Activated naive CD4-positive, alpha-beta T cell treated with anti-CD3 and anti-CD28 coated beads for 36 hours (primary cell): ENCODE measurements at regions of chr11 and their contacts with region 1.

Region 1: DNA sequence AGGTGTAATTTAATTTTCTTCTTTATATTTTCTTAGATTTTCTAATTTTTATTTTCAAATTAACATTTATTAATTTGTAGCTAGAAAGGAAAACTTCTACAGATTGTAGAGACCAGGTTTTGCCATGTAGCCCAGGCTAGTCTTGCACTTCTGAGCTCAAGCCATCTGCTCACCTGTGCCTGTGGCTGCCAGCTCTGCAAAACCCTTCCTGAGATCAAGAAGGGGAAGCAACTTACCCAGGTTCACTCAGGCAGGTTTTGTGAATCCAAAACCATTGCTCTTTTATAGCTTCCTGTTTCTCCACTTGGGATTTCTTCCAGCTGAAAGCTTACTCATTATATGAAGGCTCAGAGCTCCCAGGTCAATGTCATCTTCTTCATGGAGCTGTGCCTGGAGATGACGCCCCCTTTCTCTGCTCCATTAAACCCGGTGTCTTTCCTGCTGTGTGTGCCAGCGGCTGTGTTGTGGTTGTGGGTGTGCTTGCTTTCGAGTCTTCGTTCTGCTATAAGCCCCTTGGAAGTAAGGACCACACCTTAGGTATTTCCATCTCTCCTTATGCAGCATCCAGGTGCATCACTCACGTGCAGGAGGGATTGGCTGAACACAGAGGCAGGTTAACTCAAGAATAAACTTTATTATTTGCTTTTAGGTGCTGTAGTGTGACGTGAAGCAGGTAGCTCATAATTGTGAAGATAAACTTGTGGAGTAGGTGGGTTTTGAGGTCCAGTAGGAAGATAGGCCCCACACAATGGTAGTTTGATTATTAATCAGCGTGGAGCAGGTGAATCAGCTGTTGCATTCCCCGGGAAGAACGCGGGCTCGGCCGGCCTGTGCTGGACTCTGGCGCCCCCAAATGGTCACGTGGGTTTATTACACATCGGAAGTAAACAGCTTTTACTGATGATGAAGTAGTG is 42.2 kb upstream of the INCENP start:
- DNase-seq: peak; percentile 91
- H3K4me3 Mint-ChIP-seq: no peak overlapping the region
- H3K27ac Mint-ChIP-seq: no peak overlapping the region
- H3K4me1 Mint-ChIP-seq: peaks cover 8% of the 10 kb centered on the region
- H3K27me3 Mint-ChIP-seq: no peaks in the 10 kb centered on the region

Region 2: DNA sequence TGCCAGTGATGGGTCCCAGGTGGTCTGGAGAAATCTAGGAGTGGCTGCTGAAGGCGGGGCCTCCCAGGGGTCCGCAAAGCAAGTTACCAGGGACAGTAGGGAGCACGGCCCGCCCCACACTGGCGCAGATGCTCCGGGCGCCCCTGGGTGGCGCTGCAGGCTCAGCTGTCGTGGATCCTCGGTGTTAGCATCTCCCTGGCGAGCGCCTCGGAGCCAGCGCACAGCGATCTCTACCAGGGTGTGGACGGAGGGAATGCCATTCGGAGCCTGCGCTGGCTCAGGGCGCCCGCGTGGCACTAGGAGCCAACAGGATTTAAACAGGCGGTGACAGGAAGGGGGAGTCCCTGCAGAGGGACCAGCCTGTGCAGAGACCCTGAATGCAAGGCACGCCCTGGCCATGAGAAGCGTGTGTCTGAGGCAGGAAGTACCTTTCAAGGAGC is 210.5 kb before region 1 on chr11:
- CTCF ChIA-PET with region 1: interaction called, 32 read pairs
- intact Hi-C with region 1: loop called (anchors 1 kb)
- DNase-seq: peak; percentile 75
- H3K4me3 Mint-ChIP-seq: no peak overlapping the region
- H3K27ac Mint-ChIP-seq: no peak overlapping the region
- H3K4me1 Mint-ChIP-seq: peaks cover 2% of the 10 kb centered on the region
- H3K27me3 Mint-ChIP-seq: no peaks in the 10 kb centered on the region

Region 3: DNA sequence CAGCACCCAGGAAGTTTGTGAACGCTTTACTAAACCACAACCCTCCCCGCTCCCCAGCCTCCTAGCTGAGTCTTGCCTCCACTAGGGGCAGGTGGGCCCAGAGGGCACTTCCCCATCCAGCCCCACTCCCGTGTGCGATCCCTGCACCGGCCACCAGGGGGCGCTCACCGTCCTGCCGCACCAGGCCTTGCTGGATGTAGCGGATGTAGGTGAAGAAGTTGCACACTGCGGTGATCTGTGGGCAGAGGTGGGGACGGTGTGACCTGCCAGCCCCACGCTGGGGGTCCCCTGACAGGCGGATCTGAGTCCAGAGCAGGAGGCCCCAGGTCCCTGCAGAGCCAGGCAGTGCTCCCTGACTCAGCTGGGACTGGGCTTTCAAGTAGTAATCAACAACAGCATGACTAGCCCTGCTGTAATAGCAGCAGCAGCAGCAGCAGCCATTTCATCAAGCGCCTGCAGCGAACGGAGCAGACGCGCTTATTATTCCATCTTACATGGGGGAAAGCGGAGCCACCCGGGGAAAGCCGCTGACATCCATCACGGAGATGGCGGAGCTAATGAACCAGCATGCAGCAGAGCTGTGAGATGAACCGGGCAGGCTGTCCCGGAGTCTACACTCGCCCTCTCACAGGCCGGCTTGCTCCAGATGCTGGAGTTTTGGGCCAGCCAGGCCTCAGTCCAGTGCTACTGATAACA is 182.3 kb before region 1 on chr11:
- CTCF ChIA-PET with region 1: interaction called, 270 read pairs
- intact Hi-C with region 1: loop called (anchors 1 kb)
- DNase-seq: peak; percentile 93
- H3K4me3 Mint-ChIP-seq: no peak overlapping the region
- H3K27ac Mint-ChIP-seq: no peak overlapping the region
- H3K4me1 Mint-ChIP-seq: peaks cover 4% of the 10 kb centered on the region
- H3K27me3 Mint-ChIP-seq: no peaks in the 10 kb centered on the region

Region 4: GRCh38 chr11:61947486-61948210 is 134.0 kb before region 1 on chr11:
- CTCF ChIA-PET with region 1: interaction called, 105 read pairs
- intact Hi-C with region 1: loop called (anchors 1 kb)
- DNase-seq: peak; percentile 86
- H3K4me3 Mint-ChIP-seq: no peak overlapping the region
- H3K27ac Mint-ChIP-seq: no peak overlapping the region
- H3K4me1 Mint-ChIP-seq: peaks cover 7% of the 10 kb centered on the region
- H3K27me3 Mint-ChIP-seq: no peaks in the 10 kb centered on the region

Region 5: GRCh38 chr11:61967116-61967923 is 114.3 kb before region 1 on chr11 and contains the start of gene FTH1:
- CTCF ChIA-PET with region 1: interaction called, 32 read pairs
- intact Hi-C with region 1: no loop called
- DNase-seq: peak; percentile 85
- H3K4me3 Mint-ChIP-seq: peak within 1 kb of the TSS; percentile 93
- H3K27ac Mint-ChIP-seq: peak within 1 kb of the TSS; percentile 94
- H3K4me1 Mint-ChIP-seq: peaks cover 67% of the 10 kb centered on the region
- H3K27me3 Mint-ChIP-seq: no peaks in the 10 kb centered on the region
- total RNA-seq, gene FTH1: 1,302 to 1,352 TPM

Region 6: GRCh38 chr11:62069986-62070919 is 11.4 kb before region 1 on chr11:
- CTCF ChIA-PET with region 1: interaction called, 10 read pairs
- intact Hi-C with region 1: no loop called
- DNase-seq: no peak
- H3K4me3 Mint-ChIP-seq: no peak overlapping the region
- H3K27ac Mint-ChIP-seq: no peak overlapping the region
- H3K4me1 Mint-ChIP-seq: peaks cover 5% of the 10 kb centered on the region
- H3K27me3 Mint-ChIP-seq: no peaks in the 10 kb centered on the region

Region 7: GRCh38 chr11:62115085-62115694 is 33.6 kb after region 1 on chr11:
- CTCF ChIA-PET with region 1: interaction called, 10 read pairs
- intact Hi-C with region 1: no loop called
- DNase-seq: no peak
- H3K4me3 Mint-ChIP-seq: no peak overlapping the region
- H3K27ac Mint-ChIP-seq: no peak overlapping the region
- H3K4me1 Mint-ChIP-seq: no peaks in the 10 kb centered on the region
- H3K27me3 Mint-ChIP-seq: no peaks in the 10 kb centered on the region

Region 8: GRCh38 chr11:62337303-62338181 is 255.9 kb after region 1 on chr11 and contains the start of gene ASRGL1:
- CTCF ChIA-PET with region 1: no interaction called
- intact Hi-C with region 1: no loop called
- DNase-seq: peak; percentile 75
- H3K4me3 Mint-ChIP-seq: peak within 1 kb of the TSS; percentile 83
- H3K27ac Mint-ChIP-seq: peak within 1 kb of the TSS; percentile 16
- H3K4me1 Mint-ChIP-seq: peaks cover 9% of the 10 kb centered on the region
- H3K27me3 Mint-ChIP-seq: peaks cover 7% of the 10 kb centered on the region
- total RNA-seq, gene ASRGL1: 9.5 to 11.6 TPM

Region 9: DNA sequence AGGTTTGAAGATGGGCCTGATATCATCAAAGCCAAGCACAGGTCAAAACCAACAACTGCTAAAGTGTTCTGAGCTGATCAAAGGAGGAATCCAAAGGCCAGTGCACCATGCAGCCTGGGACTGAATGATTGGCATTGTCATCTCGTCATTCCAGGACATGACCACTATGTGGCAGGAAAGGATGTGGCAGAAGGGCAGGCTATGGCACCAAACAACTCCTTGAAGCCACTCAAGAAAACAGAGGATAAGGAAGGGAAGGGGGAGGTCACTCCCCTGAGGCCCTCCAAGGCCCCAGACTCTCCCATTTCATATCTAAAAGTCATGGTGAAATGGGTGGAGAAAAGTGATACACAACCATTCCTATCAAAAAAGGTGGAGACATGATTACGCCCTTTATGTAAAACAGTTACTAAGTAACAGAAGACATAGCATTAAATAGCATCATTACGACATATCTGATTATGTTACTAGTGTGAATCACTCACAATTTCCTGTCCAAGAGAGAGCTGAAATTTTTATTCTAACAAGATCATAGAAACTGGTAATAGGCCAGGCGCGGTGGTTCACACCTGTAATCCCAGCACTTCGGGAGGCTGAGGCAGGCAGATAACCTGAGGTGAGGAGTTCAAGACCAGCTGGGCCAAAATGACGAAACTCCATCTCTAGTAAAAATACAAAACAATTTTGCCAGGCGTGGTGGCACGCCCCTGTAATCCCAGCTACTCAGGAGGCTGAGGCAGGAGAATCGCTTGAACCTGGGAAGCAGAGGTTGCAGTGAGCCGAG is 415.7 kb after region 1 on chr11:
- CTCF ChIA-PET with region 1: no interaction called
- intact Hi-C with region 1: no loop called
- DNase-seq: peak; percentile 48
- H3K4me3 Mint-ChIP-seq: no peak overlapping the region
- H3K27ac Mint-ChIP-seq: no peak overlapping the region
- H3K4me1 Mint-ChIP-seq: no peaks in the 10 kb centered on the region
- H3K27me3 Mint-ChIP-seq: peaks cover 10% of the 10 kb centered on the region